ENCODE measurements at regions of chr10 and their contacts with region 1.

Region 1: GRCh38 chr10:77756319-77757232 is 119.0 kb upstream of the KCNMA1 start:
- DNase-seq: peak; percentile 83
- ATAC-seq: peak; percentile 100
- H3K4me3 Mint-ChIP-seq: peak overlapping the region; percentile 36
- H3K27ac Mint-ChIP-seq: 0 out of 2 replicates have a peak overlapping the region, but pooled peaks have one; percentile 71
- H3K4me1 Mint-ChIP-seq: peaks cover 10% of the 10 kb centered on the region
- H3K27me3 Mint-ChIP-seq: no peaks in the 10 kb centered on the region
- CTCF ChIP-seq: peak; percentile 49

Region 2: DNA sequence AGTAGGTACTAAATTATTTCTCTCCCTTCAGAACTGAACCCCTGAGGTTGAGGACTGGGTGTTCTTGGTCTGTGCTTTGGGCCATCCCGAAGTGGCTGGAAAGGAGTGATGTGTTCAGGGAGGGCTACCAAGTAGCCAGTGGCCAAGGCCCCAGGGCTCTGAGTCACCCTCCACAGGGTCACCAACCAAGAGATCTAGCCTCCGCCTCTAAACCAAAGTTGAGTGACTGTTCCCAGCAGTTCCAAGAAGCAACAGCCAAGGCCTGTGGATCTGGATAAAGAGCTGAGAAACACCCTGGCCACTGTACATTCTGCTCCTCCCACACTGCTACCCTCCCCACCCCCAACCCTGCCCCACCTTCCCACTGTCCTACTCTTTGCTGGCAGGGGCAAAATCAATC is 83.5 kb before region 1 on chr10:
- CTCF ChIA-PET with region 1: no interaction called
- POLR2A ChIA-PET with region 1: no interaction called
- DNase-seq: no peak
- ATAC-seq: no peak
- H3K4me3 Mint-ChIP-seq: no peak overlapping the region
- H3K27ac Mint-ChIP-seq: no peak overlapping the region
- H3K4me1 Mint-ChIP-seq: peaks cover 16% of the 10 kb centered on the region
- H3K27me3 Mint-ChIP-seq: peaks cover 6% of the 10 kb centered on the region
- CTCF ChIP-seq: no peak

Region 3: GRCh38 chr10:77746047-77746707 is 10.4 kb before region 1 on chr10:
- CTCF ChIA-PET with region 1: interaction called, 10 read pairs
- POLR2A ChIA-PET with region 1: no interaction called
- DNase-seq: no peak
- ATAC-seq: no peak
- H3K4me3 Mint-ChIP-seq: no peak overlapping the region
- H3K27ac Mint-ChIP-seq: no peak overlapping the region
- H3K4me1 Mint-ChIP-seq: no peaks in the 10 kb centered on the region
- H3K27me3 Mint-ChIP-seq: no peaks in the 10 kb centered on the region
- CTCF ChIP-seq: no peak

Region 4: DNA sequence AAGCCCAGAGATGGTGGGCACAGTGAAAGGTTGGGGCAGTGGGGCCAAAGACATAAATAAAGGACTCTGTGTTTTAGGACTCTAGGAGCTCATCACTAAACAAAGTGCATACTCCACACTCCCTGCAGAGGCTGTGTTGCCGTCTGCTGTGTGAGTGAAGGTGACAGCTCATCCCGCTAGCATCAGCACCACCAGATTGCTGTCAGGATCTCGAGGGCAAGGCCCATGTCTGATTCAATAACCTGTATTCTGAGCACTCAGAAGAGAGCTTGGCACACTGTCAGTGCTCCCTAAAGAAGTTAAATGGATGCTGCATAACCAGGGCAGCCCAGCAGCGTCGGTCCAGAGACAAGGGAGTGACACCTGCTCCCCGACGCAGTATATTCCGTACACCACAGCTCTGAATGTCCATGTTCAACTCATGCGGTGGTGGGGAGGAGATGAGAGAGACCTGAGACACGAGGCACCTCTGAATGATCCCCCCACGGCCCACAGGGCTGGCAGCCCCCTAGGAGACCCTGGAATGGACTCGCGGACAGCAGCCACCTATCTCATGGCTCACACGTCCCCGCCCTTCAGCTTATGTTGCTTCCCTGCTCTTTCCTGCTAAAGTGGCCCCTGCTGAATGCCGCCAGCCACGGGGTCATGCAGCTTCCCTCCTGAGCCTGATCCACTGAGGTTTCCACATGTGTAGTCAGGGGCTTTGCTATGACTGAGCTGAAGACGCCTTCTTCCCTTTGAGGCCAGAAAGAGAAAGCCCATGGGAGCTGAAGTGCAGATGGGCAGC is 13.7 kb after region 1 on chr10:
- CTCF ChIA-PET with region 1: interaction called, 23 read pairs
- POLR2A ChIA-PET with region 1: no interaction called
- DNase-seq: no peak
- ATAC-seq: no peak
- H3K4me3 Mint-ChIP-seq: no peak overlapping the region
- H3K27ac Mint-ChIP-seq: no peak overlapping the region
- H3K4me1 Mint-ChIP-seq: no peaks in the 10 kb centered on the region
- H3K27me3 Mint-ChIP-seq: no peaks in the 10 kb centered on the region
- CTCF ChIP-seq: no peak